Breast epithelium (tissue), 4 donors: ENCODE measurements at regions of chr1 and their contacts with region 1.

Region 1: GRCh38 chr1:41925712-41926111 is 7.0 kb upstream of the HIVEP3 start:
- DNase-seq: no peak
- H3K4me3 ChIP-seq: no peak overlapping the region
- H3K27ac ChIP-seq: no peak overlapping the region
- H3K4me1 ChIP-seq: no peaks in the 10 kb centered on the region
- H3K27me3 ChIP-seq: no peaks in the 10 kb centered on the region
- CTCF ChIP-seq: no peak
- POLR2A ChIP-seq: no peak

Region 2: GRCh38 chr1:41192456-41193178 is 733.1 kb before region 1 on chr1:
- intact Hi-C with region 1: loop called (anchors 5 kb)
- DNase-seq: no peak
- H3K4me3 ChIP-seq: no peak overlapping the region
- H3K27ac ChIP-seq: no peak overlapping the region
- H3K4me1 ChIP-seq: no peaks in the 10 kb centered on the region
- H3K27me3 ChIP-seq: no peaks in the 10 kb centered on the region
- CTCF ChIP-seq: no peak
- POLR2A ChIP-seq: no peak

Region 3: DNA sequence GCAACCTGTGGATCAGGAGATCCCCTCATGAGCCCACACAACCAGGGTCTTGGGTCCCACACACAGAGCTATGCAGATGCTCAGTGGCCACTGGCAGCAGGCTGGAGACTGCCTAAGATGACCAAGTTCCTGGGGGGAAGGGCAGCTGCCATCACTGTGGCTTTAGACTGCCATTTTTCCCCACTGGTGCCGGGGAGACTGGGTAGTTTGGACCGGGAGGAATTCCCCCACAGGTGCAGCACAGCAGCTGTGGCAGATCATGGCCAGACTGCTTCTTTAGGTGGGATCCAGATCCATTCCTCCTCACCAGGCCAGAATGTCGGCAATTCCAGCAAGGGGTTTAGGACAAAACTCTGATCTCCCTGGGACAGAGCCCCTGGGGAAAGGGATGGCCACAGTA is 38.7 kb after region 1 on chr1:
- intact Hi-C with region 1: no loop called
- DNase-seq: no peak
- H3K4me3 ChIP-seq: no peak overlapping the region
- H3K27ac ChIP-seq: no peak overlapping the region
- H3K4me1 ChIP-seq: no peaks in the 10 kb centered on the region
- H3K27me3 ChIP-seq: no peaks in the 10 kb centered on the region
- CTCF ChIP-seq: no peak
- POLR2A ChIP-seq: no peak